HCT116 (cell line): ENCODE measurements at regions of chr5 and their contacts with region 1.

Region 1: GRCh38 chr5:78537821-78538220 is 110.8 kb downstream of the LHFPL2 start:
- DNase-seq: no peak
- ATAC-seq: peak; percentile 80
- H3K4me3 ChIP-seq: no peak overlapping the region
- H3K27ac ChIP-seq: no peak overlapping the region
- H3K4me1 ChIP-seq: peaks cover 0 to 12% of the 10 kb centered on the region in 2 experiments; a peak in 1 of 4 replicates
- H3K27me3 ChIP-seq: no peaks in the 10 kb centered on the region
- CTCF ChIP-seq: peak; percentile 30 to 52 (median 38); a peak in 5 of 6 replicates
- POLR2A ChIP-seq: no peak
- RAD21 ChIP-seq: peak; percentile 77

Region 2: DNA sequence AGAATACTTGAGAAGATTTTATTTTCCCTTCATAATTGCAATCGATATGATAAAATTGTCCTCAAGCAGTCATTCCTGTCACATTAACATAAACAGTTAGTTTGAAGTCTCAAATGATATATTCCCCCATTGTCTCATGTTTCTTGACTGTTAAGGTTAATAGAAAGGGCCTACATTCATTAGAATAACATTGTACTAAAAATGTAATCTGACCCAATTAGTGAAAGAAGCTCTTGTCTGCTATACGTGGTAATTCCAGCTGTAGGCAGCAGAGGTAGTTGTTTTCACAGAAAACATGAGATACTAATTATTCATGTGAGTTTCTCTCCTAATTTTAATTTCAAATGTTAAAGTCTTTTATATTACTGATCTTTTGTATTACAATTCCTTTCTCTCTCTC is 217.4 kb before region 1 on chr5:
- CTCF ChIA-PET with region 1: interaction called, 14 read pairs
- POLR2A ChIA-PET with region 1: no interaction called
- RAD21 ChIA-PET with region 1: no interaction called
- intact Hi-C with region 1: no loop called
- DNase-seq: peak; percentile 19
- ATAC-seq: peak; percentile 70
- H3K4me3 ChIP-seq: no peak overlapping the region
- H3K27ac ChIP-seq: no peak overlapping the region
- H3K4me1 ChIP-seq: no peaks in the 10 kb centered on the region
- H3K27me3 ChIP-seq: no peaks in the 10 kb centered on the region
- CTCF ChIP-seq: peak; percentile 55 to 66 (median 58); a peak in 5 of 6 replicates
- POLR2A ChIP-seq: no peak
- RAD21 ChIP-seq: peak; percentile 74

Region 3: GRCh38 chr5:78467752-78468357 is 70.0 kb before region 1 on chr5:
- CTCF ChIA-PET with region 1: interaction called, 3 read pairs
- POLR2A ChIA-PET with region 1: no interaction called
- RAD21 ChIA-PET with region 1: no interaction called
- intact Hi-C with region 1: loop called (anchors 5 kb)
- DNase-seq: no peak
- ATAC-seq: peak; percentile 72
- H3K4me3 ChIP-seq: no peak overlapping the region
- H3K27ac ChIP-seq: no peak overlapping the region
- H3K4me1 ChIP-seq: no peaks in the 10 kb centered on the region
- H3K27me3 ChIP-seq: no peaks in the 10 kb centered on the region
- CTCF ChIP-seq: peak; percentile 54 to 81 (median 66); a peak in 5 of 6 replicates
- POLR2A ChIP-seq: no peak
- RAD21 ChIP-seq: peak; percentile 57

Region 4: GRCh38 chr5:78627175-78627574 is 89.4 kb after region 1 on chr5:
- CTCF ChIA-PET with region 1: interaction called, 3 read pairs
- POLR2A ChIA-PET with region 1: no interaction called
- RAD21 ChIA-PET with region 1: no interaction called
- intact Hi-C with region 1: loop called (anchors 5 kb)
- DNase-seq: no peak
- ATAC-seq: peak; percentile 44; the same call in 1 of the 2 replicates
- H3K4me3 ChIP-seq: no peak overlapping the region
- H3K27ac ChIP-seq: no peak overlapping the region
- H3K4me1 ChIP-seq: no peaks in the 10 kb centered on the region
- H3K27me3 ChIP-seq: no peaks in the 10 kb centered on the region
- CTCF ChIP-seq: peak; percentile 18 to 43 (median 38); a peak in 5 of 6 replicates
- POLR2A ChIP-seq: no peak
- RAD21 ChIP-seq: peak; percentile 54

Region 5: GRCh38 chr5:78886341-78887230 is 348.8 kb after region 1 on chr5:
- CTCF ChIA-PET with region 1: interaction called, 3 read pairs
- POLR2A ChIA-PET with region 1: no interaction called
- RAD21 ChIA-PET with region 1: no interaction called
- intact Hi-C with region 1: loop called (anchors 10 kb)
- DNase-seq: no peak
- ATAC-seq: peak; percentile 36; the same call in 1 of the 2 replicates
- H3K4me3 ChIP-seq: no peak overlapping the region
- H3K27ac ChIP-seq: no peak overlapping the region
- H3K4me1 ChIP-seq: peaks cover 0 to 5% of the 10 kb centered on the region in 2 experiments; a peak in 2 of 4 replicates
- H3K27me3 ChIP-seq: no peaks in the 10 kb centered on the region
- CTCF ChIP-seq: peak; percentile 30 to 77 (median 56); a peak in 5 of 6 replicates
- POLR2A ChIP-seq: no peak
- RAD21 ChIP-seq: peak; percentile 31; the same call in 1 of the 2 replicates

Region 6: DNA sequence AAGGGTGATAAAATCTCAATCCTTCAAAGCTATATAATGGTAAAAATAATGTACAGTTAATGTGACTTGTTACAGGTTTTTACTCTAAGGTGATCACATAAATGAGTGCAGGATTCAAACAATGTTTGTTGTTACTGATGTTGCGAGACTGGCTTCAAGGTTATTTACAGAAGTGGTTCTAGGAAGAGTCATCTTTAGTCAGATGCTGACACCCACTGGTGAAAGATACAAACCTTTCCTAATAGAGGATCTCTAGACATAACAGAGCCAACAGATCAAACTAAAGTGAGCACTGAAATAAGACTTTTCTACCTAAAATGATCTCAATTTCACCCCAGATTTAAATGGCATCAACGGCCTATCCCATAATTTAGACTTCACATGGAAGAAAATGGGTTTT is 427.1 kb after region 1 on chr5:
- CTCF ChIA-PET with region 1: no interaction called
- POLR2A ChIA-PET with region 1: no interaction called
- RAD21 ChIA-PET with region 1: no interaction called
- intact Hi-C with region 1: loop called (anchors 5 kb)
- DNase-seq: peak; percentile 48
- ATAC-seq: peak; percentile 79
- H3K4me3 ChIP-seq: no peak overlapping the region
- H3K27ac ChIP-seq: no peak overlapping the region
- H3K4me1 ChIP-seq: no peaks in the 10 kb centered on the region
- H3K27me3 ChIP-seq: no peaks in the 10 kb centered on the region
- CTCF ChIP-seq: peak; percentile 38 to 56 (median 48); a peak in 5 of 6 replicates
- POLR2A ChIP-seq: no peak
- RAD21 ChIP-seq: peak; percentile 80